ENCODE measurements at regions of chr4 and their contacts with region 1.

Region 1: DNA sequence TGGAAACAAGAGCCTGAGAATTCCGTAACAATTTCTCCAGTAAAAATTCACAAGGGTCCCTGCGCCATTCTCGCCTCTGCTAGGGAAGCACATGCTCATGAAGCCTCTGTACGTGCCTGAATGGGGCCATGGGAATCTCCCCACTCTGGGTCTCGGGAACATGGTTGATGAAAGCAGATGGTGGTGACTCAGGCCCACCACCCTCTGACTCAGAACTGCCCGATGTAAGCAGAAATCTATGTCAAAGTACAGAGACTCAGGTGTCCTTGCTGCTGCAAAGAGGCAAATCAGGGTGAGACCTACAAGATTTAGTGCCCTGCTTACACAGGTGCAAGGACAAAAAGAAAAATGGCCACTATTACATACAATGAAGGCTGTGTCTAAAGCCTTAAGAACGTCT is 65.0 kb downstream of the SCD5 start:
- DNase-seq: no peak
- H3K4me3 ChIP-seq: no peak overlapping the region
- CTCF ChIP-seq: no peak

Region 2: GRCh38 chr4:82360298-82361177 is 373.1 kb before region 1 on chr4:
- CTCF ChIA-PET with region 1: no interaction called
- POLR2A ChIA-PET with region 1: no interaction called
- DNase-seq: no peak
- H3K4me3 ChIP-seq: no peak overlapping the region
- CTCF ChIP-seq: peak; percentile 39

Region 3: DNA sequence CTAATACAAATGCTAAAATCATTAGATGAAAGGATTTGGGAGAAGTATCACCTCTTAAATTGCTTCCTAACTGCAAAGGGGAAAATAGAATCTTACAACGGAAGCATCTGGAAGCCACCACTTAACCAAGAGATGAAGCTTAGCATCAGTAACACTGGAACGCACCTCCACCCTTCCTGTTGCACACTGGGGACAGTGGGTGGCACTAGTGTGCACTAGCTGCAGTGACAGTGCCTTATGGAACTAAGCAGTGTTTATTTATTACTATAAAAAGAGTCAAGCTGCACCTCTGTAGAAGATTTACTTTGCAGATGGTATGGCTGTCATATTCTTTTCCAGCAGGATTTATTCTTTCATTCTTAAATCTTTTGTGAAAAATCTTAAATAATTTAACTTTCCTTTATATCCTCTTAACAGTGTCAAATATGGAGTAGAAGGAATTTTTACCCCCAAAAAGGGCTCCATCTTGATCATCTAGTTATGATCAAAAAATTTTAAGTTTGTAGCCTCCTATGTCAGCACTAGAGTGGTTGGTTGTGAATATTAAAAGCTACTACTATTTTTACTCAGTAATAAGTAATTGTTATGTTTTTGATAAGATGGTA is 11.7 kb before region 1 on chr4:
- CTCF ChIA-PET with region 1: interaction called, 32 read pairs
- POLR2A ChIA-PET with region 1: no interaction called
- DNase-seq: no peak
- H3K4me3 ChIP-seq: no peak overlapping the region
- CTCF ChIP-seq: peak; percentile 51

Measured in AG04449 (cell line).